ENCODE measurements at regions of chr9 and their contacts with region 1.

Region 1: DNA sequence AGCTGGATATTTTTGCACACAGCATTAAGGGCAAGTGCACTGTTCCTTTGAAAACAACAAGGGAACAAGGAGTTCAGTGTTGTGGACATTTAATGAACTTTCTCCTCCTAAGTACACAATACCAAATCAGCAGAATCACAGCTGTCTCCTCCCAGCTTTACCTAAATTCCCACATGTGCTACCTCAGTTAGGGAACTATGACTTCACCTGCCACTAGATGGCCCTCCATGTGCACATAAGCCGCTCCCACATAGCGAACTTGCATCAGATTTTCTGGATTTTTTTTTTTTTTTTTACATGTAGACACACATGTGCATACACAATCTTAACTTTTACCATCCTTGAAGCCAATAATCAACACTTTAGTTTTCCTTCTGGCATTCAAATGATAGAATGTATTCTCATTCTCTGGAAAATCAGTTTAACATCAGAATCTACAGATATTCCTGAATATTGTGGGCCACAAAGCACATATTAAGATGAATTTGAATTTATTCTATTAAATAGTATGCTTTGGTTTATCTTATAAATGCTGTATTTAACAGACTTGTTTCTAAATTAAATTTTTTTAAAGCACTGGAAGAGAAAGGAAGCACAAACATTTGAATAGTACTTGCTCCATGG is 123.6 kb downstream of the PALM2AKAP2 start:
- DNase-seq: peak; percentile 39 to 61
- ATAC-seq: peak; percentile 29 to 80 (median 45)
- H3K4me3 ChIP-seq: no peak overlapping the region
- H3K27ac ChIP-seq: no peak overlapping the region
- H3K4me1 ChIP-seq: peaks cover 14% of the 10 kb centered on the region
- H3K27me3 ChIP-seq: no peaks in the 10 kb centered on the region
- CTCF ChIP-seq: peak; percentile 84

Region 2: DNA sequence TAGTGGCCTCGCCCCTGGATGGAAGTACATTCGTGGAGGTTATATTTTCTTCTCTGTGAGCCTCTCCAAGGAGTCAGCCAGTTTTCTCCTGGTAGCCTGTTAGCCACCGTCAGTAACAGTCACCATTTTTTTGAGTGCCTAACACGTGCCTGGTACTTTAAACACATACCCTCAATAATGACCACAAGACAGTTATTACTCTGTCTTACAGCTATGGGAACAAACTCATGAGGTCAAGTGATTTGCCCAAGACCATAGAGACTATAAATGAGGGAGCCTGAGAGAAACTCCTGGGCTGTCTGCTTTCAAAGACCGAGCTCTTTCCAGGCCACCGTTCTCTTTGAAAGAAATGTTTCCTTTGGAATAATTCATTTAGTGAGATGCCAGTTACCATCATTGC is 33.3 kb before region 1 on chr9:
- intact Hi-C with region 1: loop called in 1 of 2 experiments (anchors 1 kb)
- DNase-seq: no peak
- ATAC-seq: no peak
- H3K4me3 ChIP-seq: no peak overlapping the region
- H3K27ac ChIP-seq: no peak overlapping the region
- H3K4me1 ChIP-seq: peaks cover 17% of the 10 kb centered on the region
- H3K27me3 ChIP-seq: peaks cover 0 to 3% (median 0%) of the 10 kb centered on the region in 3 donors
- CTCF ChIP-seq: no peak

Region 3: DNA sequence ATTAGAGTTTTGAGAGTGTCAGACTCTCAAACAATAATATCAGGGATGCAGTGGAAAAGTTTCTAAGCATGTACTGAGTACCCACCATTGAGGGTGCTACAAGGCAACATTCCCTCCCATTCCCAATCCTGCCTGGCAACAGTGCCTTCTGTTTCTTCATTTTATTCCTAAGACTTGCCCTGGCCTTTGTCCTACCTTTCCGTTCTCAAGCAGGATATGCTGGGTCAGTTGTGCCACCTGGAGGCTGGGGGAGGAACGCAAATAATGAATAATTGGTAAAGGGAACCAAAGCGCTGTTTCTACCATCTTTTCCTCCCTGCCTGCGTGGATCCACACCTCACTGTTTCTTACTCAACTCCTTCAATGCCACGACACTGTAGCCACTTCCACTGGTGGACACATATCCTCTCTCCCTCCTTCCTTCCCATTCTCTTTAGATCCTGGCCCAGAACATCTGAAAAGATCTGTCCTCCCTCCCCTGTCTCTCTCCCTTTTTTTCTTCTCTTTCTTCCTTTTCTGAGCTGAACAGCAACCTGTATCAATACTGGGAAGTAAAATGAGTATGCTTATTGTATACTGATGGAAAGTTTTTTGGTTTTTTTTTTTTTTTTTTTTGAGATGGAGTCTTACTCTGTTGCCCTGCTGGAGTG is 154.8 kb after region 1 on chr9:
- intact Hi-C with region 1: loop called (anchors 1 to 5 kb)
- DNase-seq: peak in 1 of 2 donors; percentile 29
- ATAC-seq: peak; percentile 66 to 85 (median 79)
- H3K4me3 ChIP-seq: no peak overlapping the region
- H3K27ac ChIP-seq: no peak overlapping the region
- H3K4me1 ChIP-seq: no peaks in the 10 kb centered on the region
- H3K27me3 ChIP-seq: peaks cover 0 to 4% (median 0%) of the 10 kb centered on the region in 3 donors
- CTCF ChIP-seq: peak; percentile 69

Region 4: DNA sequence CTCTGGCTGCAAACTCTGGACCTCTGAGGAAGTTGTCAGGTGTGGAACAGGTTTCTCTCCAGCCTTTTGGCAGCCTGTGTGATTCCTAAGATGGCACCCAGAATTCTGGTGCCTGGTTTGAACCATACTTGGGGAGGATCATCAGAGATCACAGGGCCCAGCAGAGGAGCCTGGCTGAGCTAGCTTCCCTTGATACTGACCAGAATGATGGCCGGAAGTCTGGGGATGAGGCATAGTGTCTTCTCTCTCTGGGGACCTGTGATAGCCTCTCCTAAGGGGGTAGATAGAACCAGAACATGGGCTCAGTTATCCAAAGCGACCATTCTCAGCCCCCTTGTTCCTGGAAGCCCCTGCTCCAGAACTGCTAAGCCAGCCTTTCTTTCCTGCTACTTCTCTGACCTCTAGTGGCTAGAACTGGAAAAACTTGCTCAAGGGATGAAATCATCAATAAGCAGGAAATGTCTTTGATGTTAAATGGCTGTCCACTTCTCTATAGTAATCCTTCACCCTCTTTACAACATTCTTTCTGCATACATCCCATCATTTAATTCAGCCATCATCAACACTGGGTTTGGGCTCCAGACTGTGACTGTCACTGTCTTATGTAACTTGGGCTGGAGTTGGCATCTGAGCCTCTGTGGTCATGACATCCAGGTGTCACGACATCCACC is 249.2 kb after region 1 on chr9:
- intact Hi-C with region 1: loop called (anchors 2 to 5 kb)
- DNase-seq: no peak
- ATAC-seq: peak; percentile 36 to 68 (median 42)
- H3K4me3 ChIP-seq: no peak overlapping the region
- H3K27ac ChIP-seq: no peak overlapping the region
- H3K4me1 ChIP-seq: peaks cover 21% of the 10 kb centered on the region
- H3K27me3 ChIP-seq: no peaks in the 10 kb centered on the region
- CTCF ChIP-seq: peak; percentile 67

Region 5: GRCh38 chr9:110217656-110218099 is 314.1 kb after region 1 on chr9:
- intact Hi-C with region 1: loop called in 1 of 2 experiments (anchors 5 kb)
- DNase-seq: no peak
- ATAC-seq: no peak
- H3K4me3 ChIP-seq: no peak overlapping the region
- H3K27ac ChIP-seq: no peak overlapping the region
- H3K4me1 ChIP-seq: no peaks in the 10 kb centered on the region
- H3K27me3 ChIP-seq: no peaks in the 10 kb centered on the region
- CTCF ChIP-seq: peak; percentile 74